ENCODE measurements at regions of chr2 and their contacts with region 1.

Region 1: GRCh38 chr2:194182888-194183287 is 1474.1 kb upstream of the SLC39A10 start:
- DNase-seq: no peak
- H3K4me3 ChIP-seq: no peak overlapping the region
- H3K27ac ChIP-seq: no peak overlapping the region
- H3K4me1 ChIP-seq: no peaks in the 10 kb centered on the region
- H3K27me3 ChIP-seq: no peaks in the 10 kb centered on the region
- CTCF ChIP-seq: no peak
- POLR2A ChIP-seq: no peak

Region 2: DNA sequence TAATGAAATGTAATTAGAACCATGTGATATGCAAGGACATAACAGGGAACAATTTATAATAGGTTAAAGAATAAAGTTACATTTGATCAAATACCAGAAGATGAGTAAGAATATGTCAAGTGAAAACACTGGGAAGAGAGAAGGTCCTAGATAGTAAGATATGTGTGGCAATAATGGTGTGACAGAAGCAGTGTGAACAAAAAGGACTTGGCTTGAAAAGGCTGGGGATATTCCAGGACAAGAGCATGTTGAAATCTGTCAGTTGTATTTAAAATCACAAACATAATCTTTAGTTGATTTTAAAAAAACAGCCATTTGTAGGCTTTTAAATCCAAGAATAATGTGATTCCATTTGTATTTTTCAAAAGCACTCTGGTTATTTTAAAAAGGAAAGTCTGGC is 74.2 kb after region 1 on chr2:
- intact Hi-C with region 1: loop called (anchors 2 kb)
- DNase-seq: no peak
- H3K4me3 ChIP-seq: no peak overlapping the region
- H3K27ac ChIP-seq: no peak overlapping the region
- H3K4me1 ChIP-seq: no peaks in the 10 kb centered on the region
- H3K27me3 ChIP-seq: no peaks in the 10 kb centered on the region
- CTCF ChIP-seq: no peak
- POLR2A ChIP-seq: no peak